ENCODE measurements at regions of chr22 and their contacts with region 1.

Region 1: GRCh38 chr22:31676700-31677099 is 14.7 kb upstream of the PISD start:
- DNase-seq: peak; percentile 94 to 99
- H3K4me3 ChIP-seq: peak overlapping the region; percentile 4
- CTCF ChIP-seq: no peak
- POLR2A ChIP-seq: no peak

Region 2: GRCh38 chr22:31739795-31740201 is 63.1 kb after region 1 on chr22:
- intact Hi-C with region 1: no loop called
- DNase-seq: peak in 1 of 2 donors; percentile 50
- H3K4me3 ChIP-seq: no peak overlapping the region
- CTCF ChIP-seq: no peak
- POLR2A ChIP-seq: no peak

Region 3: DNA sequence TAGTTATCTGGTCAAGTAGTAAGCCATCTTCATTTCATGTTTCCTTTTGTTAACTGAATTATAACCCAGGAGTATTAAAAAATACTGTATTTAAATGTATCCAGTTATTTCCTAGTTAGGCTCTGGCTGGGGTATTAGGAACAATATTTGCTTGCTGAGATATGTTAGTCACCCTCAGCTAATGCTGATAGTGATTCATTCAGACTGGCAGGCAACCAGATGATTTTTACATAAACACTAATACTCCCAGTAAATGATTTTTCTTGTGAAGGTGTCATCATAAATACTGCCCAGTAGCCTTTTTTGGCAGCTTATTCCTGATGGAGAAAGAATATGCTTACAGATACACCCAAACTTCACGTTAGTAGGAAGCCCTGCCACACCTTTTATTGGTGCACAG is 275.8 kb after region 1 on chr22:
- intact Hi-C with region 1: loop called (anchors 10 kb)
- DNase-seq: peak in 1 of 2 donors; percentile 61
- H3K4me3 ChIP-seq: no peak overlapping the region
- CTCF ChIP-seq: no peak
- POLR2A ChIP-seq: no peak